ENCODE measurements at regions of chr1 and their contacts with region 1.

Region 1: DNA sequence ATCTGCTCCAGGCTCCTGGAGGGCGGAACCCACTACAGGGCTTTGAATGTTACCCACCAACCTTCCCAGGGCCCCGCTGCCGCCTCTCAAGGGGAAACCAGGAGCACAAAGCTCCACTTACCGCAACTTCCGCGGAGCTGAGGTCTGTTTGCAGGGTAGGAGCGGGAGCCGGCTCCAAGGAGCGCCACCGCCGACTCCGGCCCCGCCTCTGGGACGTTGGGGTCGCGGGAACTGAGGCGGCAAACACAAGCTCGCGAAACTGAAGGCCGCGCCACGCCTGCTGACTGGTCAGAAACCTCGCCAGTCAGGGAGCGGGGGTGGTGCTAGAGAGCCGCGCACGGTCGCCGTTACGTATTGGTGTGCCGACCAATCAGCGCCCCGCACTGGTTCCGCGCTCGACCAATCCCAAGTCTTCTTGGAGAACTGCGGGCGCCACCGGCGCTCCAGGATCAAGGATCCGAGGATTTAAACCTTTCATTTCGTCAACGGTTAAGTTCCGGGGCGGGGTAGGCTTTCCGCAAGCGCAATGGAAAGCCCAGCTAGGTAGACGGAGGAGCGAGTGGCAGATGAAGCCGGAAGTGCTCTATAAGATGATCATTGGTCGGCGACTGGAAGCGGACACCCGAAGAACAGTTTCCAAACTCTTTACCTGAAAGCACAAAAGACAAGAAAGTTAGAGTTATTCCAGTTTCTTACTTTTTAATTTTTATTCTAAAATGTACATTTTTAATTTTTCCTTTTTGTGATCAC is at the start of gene STIL:
- DNase-seq: peak; percentile 97 to 99
- H3K4me3 ChIP-seq: peak within 1 kb of the TSS; percentile 83 to 99 (median 93)
- H3K27ac ChIP-seq: peak within 1 kb of the TSS; percentile 67
- H3K4me1 ChIP-seq: no peaks in the 10 kb centered on the region; a peak in 1 of 7 replicates
- H3K27me3 ChIP-seq: no peaks in the 10 kb centered on the region
- CTCF ChIP-seq: no peak
- EP300 ChIP-seq: no peak
- POLR2A ChIP-seq: peak; percentile 52 to 93
- RAD21 ChIP-seq: no peak
- total RNA-seq, gene STIL: 25.1 and 26.5 TPM in 2 replicates

Region 2: DNA sequence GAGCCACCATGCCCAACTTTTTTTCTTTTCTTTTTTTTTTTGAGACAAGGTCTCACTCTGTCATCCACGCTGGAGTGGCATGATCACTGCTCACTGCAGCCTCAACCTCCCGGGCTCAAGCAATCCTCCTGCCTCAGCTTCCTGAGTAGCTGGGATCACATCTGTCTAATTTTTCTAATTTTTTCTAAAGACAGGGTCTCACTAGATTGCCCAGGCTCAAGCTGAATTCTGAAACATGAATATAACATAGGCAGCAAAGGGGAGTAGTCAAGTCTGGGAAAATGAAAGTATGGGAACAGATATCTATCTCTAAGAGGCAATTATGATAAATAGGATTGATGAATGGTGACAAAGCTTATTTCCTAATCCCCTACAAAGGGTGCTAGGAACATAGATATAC is 12.2 kb after region 1 on chr1:
- CTCF ChIA-PET with region 1: interaction called, 12 read pairs
- POLR2A ChIA-PET with region 1: interaction called, 7 read pairs
- DNase-seq: no peak
- H3K4me3 ChIP-seq: no peak overlapping the region
- H3K27ac ChIP-seq: no peak overlapping the region
- H3K4me1 ChIP-seq: no peaks in the 10 kb centered on the region
- H3K27me3 ChIP-seq: no peaks in the 10 kb centered on the region
- CTCF ChIP-seq: no peak
- EP300 ChIP-seq: no peak
- POLR2A ChIP-seq: no peak
- RAD21 ChIP-seq: no peak

Region 3: DNA sequence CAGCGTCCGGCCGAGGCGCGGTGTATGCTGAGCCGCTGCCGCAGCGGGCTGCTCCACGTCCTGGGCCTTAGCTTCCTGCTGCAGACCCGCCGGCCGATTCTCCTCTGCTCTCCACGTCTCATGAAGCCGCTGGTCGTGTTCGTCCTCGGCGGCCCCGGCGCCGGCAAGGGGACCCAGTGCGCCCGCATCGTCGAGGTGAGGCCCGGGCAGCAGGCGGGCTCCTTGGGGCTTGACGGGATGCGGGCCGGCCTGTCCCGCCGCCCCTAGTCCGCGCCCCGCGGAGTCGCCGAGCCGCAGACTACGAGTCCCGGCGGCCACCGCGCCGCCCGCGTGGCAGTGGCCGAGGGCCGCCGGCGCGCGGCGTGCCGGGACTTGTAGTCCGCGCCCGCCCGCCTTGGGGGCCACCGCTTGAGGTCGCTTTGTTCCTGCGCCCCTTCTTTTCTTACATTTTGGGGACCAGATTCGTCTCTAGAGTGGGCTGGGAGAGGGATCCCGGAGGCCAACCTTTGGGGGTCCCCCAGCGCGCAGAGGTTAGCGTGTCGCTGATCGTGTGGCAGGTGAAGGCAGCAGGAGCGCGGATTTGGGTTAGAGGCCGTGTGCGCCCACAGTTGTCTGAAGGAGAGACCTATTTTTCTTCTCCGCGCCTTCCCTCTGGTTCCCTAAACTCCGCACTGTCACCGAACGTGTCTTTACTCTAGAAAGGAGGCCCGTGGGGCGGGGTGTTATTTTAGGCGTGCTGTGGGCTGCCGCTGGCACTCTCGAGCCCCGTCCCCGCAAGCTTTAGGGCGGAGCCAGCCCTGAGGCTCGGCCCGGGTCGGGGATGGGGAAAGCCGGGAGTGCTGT is 20.1 kb after region 1 on chr1:
- CTCF ChIA-PET with region 1: interaction called, 11 read pairs
- POLR2A ChIA-PET with region 1: interaction called, 18 read pairs
- DNase-seq: peak in 1 of 2 experiments; percentile 85
- H3K4me3 ChIP-seq: peak overlapping the region; percentile 79 to 94 (median 86)
- H3K27ac ChIP-seq: peak overlapping the region; percentile 60
- H3K4me1 ChIP-seq: peaks cover 0 to 5% (median 3%) of the 10 kb centered on the region in 4 experiments; a peak in 5 of 7 replicates
- H3K27me3 ChIP-seq: no peaks in the 10 kb centered on the region
- CTCF ChIP-seq: no peak
- EP300 ChIP-seq: no peak
- POLR2A ChIP-seq: peak in 1 of 2 experiments; percentile 35; a peak in 1 of 3 replicates
- RAD21 ChIP-seq: no peak

Measured in H1 (cell line).